Activated CD8-positive, alpha-beta T cell treated with anti-CD3 and anti-CD28 coated beads, Interleukin-2, amount 10 ng/mL, durations not matched to agents 7 days and 5 days (primary cell): ENCODE measurements at regions of chr10 and their contacts with region 1.

Region 1: GRCh38 chr10:6586501-6586900 is 6.4 kb upstream of the PRKCQ start:
- DNase-seq: peak; percentile 55
- ATAC-seq: peak; percentile 13
- H3K4me3 Mint-ChIP-seq: peak overlapping the region; percentile 93
- H3K27ac Mint-ChIP-seq: peak overlapping the region; percentile 97
- H3K4me1 Mint-ChIP-seq: peaks cover 74% of the 10 kb centered on the region
- H3K27me3 Mint-ChIP-seq: no peaks in the 10 kb centered on the region

Region 2: GRCh38 chr10:6601246-6601805 is 14.8 kb after region 1 on chr10:
- CTCF ChIA-PET with region 1: interaction called, 131 read pairs
- POLR2A ChIA-PET with region 1: interaction called, 239 read pairs
- DNase-seq: peak; percentile 47
- ATAC-seq: peak; percentile 31
- H3K4me3 Mint-ChIP-seq: peak overlapping the region; percentile 20
- H3K27ac Mint-ChIP-seq: peak overlapping the region; percentile 88
- H3K4me1 Mint-ChIP-seq: peaks cover 80% of the 10 kb centered on the region
- H3K27me3 Mint-ChIP-seq: no peaks in the 10 kb centered on the region